ENCODE measurements at regions of chr11 and their contacts with region 1.

Region 1: GRCh38 chr11:64608046-64608445 is 17.0 kb downstream of the SLC22A12 start:
- DNase-seq: peak in 5 of 10 donors; percentile 41 to 72 (median 58)
- H3K4me3 ChIP-seq: peak overlapping the region in 27 of 59 donors; percentile 2 to 38 (median 26)
- H3K27ac ChIP-seq: peak overlapping the region in 38 of 59 donors; percentile 12 to 83 (median 39)
- H3K27me3 ChIP-seq: no peaks in the 10 kb centered on the region
- CTCF ChIP-seq: no peak

Region 2: DNA sequence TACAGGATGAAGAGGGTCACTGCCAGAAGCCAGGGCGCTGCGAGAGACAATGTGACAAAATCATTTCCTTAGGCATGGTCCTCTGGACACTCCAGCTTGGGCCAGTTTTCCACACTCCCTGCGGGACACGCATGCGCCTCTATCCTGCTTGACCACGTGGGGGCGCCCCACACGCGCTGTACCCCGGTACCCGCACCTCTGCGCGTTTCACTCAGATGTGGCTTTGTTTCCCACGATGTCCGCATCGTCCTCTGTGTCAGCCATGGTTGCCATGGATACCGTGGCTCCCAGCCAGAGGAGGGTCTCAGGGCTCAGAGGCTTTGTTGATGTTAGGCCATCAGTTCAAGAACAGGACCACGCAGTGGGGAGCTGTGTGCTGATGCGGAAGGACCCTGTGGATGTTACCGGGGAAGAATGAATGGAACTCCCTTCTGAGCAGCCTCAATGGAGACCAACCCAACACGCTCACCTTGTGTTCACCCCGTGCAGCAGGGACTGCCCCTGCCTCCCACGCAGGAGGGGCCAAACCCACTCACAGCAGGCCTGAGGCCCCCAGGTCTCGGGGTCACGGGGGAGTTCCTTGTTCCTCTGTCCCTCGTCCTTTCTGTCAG is 118.1 kb before region 1 on chr11:
- intact Hi-C with region 1: loop called in 1 of 2 experiments (anchors 10 kb)
- DNase-seq: peak; percentile 46 to 85 (median 72)
- H3K4me3 ChIP-seq: peak overlapping the region in 9 of 59 donors; percentile 2 to 29 (median 24)
- H3K27ac ChIP-seq: no peak overlapping the region
- H3K27me3 ChIP-seq: peaks cover 0 to 4% (median 0%) of the 10 kb centered on the region in 45 donors
- CTCF ChIP-seq: peak; percentile 47 to 84 (median 75)

Region 3: GRCh38 chr11:64531906-64532312 is 76.1 kb before region 1 on chr11:
- intact Hi-C with region 1: no loop called
- DNase-seq: peak in 1 of 10 donors; percentile 92
- H3K4me3 ChIP-seq: no peak overlapping the region
- H3K27ac ChIP-seq: peak overlapping the region in 1 of 59 donors; percentile 64
- H3K27me3 ChIP-seq: peaks cover 0 to 6% (median 0%) of the 10 kb centered on the region in 45 donors
- CTCF ChIP-seq: no peak